ENCODE measurements at regions of chr19 and their contacts with region 1.

Region 1: DNA sequence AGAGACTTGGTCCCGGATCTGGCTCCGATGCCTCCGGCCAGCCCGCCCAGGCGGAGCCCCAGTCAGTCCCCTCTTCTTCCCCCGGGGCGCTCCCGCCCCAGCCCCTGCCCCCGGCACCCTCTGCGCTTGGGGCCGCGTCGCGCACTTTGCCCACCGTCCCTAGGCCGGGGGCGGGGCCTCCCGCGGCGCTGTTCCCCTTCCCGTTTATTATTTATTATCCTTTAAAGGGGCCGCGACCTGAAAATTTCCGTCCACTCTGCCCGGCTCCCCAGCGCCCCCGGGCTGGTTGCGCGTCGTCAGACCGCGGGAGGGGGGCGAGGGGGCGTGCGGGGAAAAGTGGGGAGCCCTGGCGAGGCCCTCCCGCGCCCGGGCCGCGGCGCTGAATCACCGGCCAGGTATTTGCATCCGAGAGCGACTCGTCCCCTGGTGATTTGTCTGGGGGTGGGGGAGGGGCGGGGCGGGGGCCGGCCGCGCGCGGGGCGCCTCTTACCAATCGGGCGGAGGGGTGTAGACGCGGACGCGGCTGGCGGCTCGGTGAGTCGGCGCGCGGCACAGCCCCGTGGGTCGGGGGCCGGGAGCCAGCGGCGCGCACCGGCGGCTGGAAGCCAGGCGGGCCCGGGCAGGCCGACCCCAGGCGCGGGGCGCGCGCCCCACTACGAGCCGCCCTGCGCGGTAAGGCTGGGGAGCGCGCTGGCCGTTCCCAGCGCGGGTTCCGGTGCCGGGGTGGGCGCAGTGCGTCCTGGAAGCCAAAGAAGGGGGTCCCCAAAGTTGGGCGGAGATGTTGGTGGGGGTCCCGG is at the start of gene ARID3A:
- DNase-seq: no peak
- H3K4me3 ChIP-seq: peak within 1 kb of the TSS; percentile 85
- CTCF ChIP-seq: no peak

Region 2: DNA sequence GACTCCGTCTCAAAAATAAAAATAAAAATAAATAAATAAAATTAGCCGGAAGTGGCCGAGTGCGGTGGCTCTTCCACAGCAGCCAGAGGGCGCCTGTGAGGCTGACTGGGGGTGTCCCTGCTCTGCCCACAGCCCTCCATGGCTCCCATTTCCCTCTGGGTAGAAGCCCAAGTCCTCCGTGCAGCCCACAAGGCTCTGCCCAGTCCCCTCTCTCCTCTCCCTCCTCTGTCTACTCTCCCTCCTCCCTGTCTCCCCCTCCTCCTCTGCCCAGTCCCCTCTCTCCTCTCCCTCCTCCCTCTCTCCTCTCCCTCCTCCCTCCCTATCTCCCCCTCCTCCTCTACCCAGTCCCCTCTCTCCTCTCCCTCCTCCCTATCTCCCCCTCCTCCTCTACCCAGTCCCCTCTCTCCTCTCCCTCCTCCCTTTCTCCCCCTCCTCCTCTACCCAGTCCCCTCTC is 154.4 kb before region 1 on chr19:
- CTCF ChIA-PET with region 1: interaction called, 19 read pairs
- POLR2A ChIA-PET with region 1: no interaction called
- DNase-seq: no peak
- H3K4me3 ChIP-seq: no peak overlapping the region
- CTCF ChIP-seq: peak; percentile 52

Region 3: DNA sequence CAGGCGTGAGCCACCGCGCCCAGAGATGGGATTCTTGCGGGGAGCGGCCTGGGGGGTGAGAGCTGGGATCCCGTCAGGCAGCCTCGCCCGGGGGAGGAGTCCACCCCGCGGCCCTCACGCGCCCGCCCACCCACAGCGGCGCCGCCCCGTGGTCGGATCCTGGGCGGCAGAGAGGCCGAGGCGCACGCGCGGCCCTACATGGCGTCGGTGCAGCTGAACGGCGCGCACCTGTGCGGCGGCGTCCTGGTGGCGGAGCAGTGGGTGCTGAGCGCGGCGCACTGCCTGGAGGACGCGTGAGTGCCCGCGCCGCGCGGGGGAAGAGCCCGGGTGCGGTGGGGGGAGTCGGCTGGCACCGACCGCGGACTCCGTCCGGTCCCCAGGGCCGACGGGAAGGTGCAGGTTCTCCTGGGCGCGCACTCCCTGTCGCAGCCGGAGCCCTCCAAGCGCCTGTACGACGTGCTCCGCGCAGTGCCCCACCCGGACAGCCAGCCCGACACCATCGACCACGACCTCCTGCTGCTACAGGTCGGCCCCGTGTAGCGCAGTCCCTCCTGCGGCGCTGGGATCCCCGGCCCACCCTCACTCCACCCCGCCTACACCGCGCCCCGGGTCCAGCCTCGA is 65.1 kb before region 1 on chr19:
- CTCF ChIA-PET with region 1: interaction called, 13 read pairs
- POLR2A ChIA-PET with region 1: no interaction called
- DNase-seq: no peak
- H3K4me3 ChIP-seq: peak overlapping the region; percentile 47
- CTCF ChIP-seq: peak; percentile 37

Region 4: DNA sequence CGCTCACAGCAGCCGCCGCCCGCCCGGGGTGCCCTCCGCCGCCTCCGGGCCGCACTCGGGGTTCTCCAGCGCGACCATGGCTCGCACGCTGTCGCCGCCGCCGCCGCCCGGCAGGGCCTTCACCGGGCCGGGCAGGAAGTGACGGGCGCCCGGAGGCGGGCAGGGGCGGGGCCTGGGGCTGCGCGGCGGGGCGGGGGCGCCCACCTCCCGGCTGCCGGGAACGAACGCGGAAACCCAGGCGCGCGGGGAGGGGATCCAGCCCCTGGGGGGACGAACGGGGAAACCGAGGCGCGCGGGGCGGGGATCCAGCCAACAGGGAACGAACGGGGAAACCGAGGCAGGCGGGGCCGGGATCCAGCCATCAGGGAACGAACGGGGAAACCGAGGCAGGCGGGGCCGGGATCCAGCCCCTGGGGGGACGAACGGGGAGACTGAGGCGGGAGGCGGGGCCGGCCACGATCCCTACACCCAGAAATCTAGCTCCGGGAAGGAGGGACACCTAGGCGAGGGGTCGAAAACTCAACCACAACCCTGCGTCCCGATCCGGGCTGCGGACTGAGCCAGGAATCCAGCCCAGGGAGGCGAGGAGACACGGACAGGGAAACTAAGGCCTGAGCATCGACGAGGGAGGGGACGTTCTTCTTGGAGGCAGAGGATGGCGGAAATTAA is 12.5 kb before region 1 on chr19 and contains the start of gene R3HDM4:
- CTCF ChIA-PET with region 1: no interaction called
- POLR2A ChIA-PET with region 1: no interaction called
- DNase-seq: no peak
- H3K4me3 ChIP-seq: peak within 1 kb of the TSS; percentile 88
- CTCF ChIP-seq: no peak

Region 5: GRCh38 chr19:984165-984967 is 58.6 kb after region 1 on chr19 and contains the start of gene WDR18:
- CTCF ChIA-PET with region 1: interaction called, 259 read pairs
- POLR2A ChIA-PET with region 1: interaction called, 11 read pairs
- DNase-seq: peak; percentile 14
- H3K4me3 ChIP-seq: peak within 1 kb of the TSS; percentile 93
- CTCF ChIP-seq: no peak

Region 6: DNA sequence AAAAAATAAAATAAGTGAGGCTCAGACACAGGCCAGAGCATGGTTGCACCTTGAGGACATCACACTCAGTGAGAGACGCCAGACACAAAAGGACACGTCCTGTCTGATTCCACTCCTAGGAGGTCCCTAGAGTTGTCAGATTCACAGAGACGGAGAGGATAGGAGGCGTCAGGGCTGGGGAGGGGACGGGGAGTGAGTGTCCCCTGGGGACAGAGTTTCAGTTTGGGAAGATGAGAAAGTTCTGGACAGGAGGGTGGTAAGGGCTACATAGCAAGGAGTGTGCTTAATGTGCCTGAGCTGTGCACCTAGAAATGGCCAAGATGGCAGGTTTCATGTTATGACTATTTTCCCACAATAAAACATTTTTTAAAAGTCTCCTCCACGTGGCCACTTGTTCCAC is 72.3 kb after region 1 on chr19:
- CTCF ChIA-PET with region 1: interaction called, 27 read pairs
- POLR2A ChIA-PET with region 1: interaction called, 4 read pairs
- DNase-seq: no peak
- H3K4me3 ChIP-seq: no peak overlapping the region
- CTCF ChIP-seq: no peak

Region 7: DNA sequence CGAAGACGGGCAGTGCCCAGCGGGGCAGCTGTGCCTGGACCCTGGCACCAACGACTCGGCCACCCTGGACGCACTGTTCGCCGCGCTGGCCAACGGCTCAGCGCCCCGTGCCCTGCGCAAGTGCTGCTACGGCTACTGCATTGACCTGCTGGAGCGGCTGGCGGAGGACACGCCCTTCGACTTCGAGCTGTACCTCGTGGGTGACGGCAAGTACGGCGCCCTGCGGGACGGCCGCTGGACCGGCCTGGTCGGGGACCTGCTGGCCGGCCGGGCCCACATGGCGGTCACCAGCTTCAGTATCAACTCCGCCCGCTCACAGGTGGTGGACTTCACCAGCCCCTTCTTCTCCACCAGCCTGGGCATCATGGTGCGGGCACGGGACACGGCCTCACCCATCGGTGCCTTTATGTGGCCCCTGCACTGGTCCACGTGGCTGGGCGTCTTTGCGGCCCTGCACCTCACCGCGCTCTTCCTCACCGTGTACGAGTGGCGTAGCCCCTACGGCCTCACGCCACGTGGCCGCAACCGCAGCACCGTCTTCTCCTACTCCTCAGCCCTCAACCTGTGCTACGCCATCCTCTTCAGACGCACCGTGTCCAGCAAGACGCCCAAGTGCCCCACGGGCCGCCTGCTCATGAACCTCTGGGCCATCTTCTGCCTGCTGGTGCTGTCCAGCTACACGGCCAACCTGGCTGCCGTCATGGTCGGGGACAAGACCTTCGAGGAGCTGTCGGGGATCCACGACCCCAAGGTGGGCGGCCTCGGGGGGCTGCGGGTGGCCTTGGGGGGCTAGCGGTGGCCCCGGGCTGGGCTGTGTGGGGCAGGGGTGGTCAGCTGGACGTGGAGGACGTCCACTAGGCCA is 79.3 kb after region 1 on chr19:
- CTCF ChIA-PET with region 1: interaction called, 10 read pairs
- POLR2A ChIA-PET with region 1: no interaction called
- DNase-seq: no peak
- H3K4me3 ChIP-seq: no peak overlapping the region
- CTCF ChIP-seq: no peak

Measured in AG04449 (cell line).